PC-3 (cell line): ENCODE measurements at regions of chr1 and their contacts with region 1.

Region 1: DNA sequence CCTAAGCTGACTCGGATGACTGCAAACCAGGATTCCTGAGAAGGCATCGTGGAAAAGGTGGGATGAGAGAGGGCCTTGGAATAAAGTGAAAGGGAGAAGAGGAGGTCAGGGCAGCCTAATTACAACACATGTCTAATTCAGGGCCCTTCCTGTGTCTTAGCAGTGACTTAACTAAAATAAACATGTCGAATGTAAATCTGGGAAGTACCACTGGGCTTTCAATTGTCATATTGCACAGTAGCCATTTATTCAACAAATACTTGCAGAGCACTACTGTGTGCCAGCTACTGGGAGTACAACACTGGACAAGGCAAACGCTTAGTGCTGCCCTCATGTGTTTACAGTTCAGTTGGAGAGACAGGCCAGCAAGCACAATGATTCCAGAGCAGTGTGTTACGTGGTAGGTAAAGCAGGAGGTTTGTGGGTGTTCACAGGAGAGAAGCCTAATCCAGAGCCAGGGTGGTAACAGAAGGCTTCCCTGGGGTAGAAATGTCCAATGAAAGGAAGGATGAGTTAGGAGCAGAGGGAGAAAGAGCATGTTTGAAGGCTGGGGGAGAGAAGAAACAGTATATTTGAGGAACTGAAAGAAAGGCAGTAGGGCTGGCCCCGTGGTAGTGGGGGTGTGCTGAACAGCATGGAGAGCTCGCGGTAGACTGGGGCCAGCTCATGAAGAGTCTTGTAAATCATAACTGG is 38.0 kb upstream of the RASAL2 start:
- DNase-seq: peak; percentile 54
- ATAC-seq: peak; percentile 80
- H3K4me3 ChIP-seq: 0 out of 2 replicates have a peak overlapping the region, but pooled peaks have one; percentile 21
- H3K27ac ChIP-seq: peak overlapping the region; percentile 49
- H3K4me1 ChIP-seq: peaks cover 17% of the 10 kb centered on the region
- H3K27me3 ChIP-seq: no peaks in the 10 kb centered on the region
- CTCF ChIP-seq: peak; percentile 51

Region 2: DNA sequence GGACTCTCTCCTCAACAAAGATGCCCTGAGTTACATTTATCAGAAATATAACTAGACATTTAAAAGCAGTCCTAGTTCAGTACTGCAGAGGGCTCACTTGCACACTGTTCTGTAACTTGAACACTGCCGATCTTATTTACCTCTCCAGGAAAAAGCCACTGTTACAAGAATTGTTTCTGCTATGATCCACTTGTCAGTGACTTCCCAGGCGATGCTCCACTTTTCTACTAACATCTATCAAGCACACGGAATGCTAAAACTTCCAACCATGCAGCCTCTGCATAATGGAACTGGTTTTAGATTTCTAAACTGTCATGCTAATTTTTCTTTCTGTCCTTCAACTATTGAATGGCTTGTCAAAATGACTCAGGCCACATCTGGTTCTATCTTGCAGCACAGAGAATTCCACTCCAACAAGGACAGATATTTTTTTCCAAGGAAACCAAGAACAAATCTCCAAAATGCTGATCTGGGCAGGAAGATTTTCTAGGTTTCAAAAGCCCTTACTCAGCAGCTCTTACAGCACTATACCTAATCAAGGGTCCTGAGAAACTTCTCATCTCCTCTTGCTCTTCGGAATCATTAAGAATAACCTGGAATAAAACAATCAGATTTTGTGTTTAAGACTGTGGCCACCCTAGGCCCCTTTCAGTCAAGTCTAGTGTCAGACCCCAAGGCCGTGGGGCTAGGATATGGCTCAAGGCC is 96.0 kb before region 1 on chr1:
- CTCF ChIA-PET with region 1: interaction called, 3 read pairs
- POLR2A ChIA-PET with region 1: no interaction called
- intact Hi-C with region 1: loop called (anchors 1 kb)
- DNase-seq: peak; percentile 55
- ATAC-seq: peak; percentile 86
- H3K4me3 ChIP-seq: no peak overlapping the region
- H3K27ac ChIP-seq: no peak overlapping the region
- H3K4me1 ChIP-seq: no peaks in the 10 kb centered on the region
- H3K27me3 ChIP-seq: no peaks in the 10 kb centered on the region
- CTCF ChIP-seq: peak; percentile 64

Region 3: GRCh38 chr1:178093205-178093957 is 37.5 kb after region 1 on chr1:
- CTCF ChIA-PET with region 1: no interaction called
- POLR2A ChIA-PET with region 1: no interaction called
- intact Hi-C with region 1: loop called (anchors 5 kb)
- DNase-seq: peak; percentile 92
- ATAC-seq: peak; percentile 80
- H3K4me3 ChIP-seq: peak overlapping the region; percentile 83
- H3K27ac ChIP-seq: peak overlapping the region; percentile 54
- H3K4me1 ChIP-seq: peaks cover 41% of the 10 kb centered on the region
- H3K27me3 ChIP-seq: no peaks in the 10 kb centered on the region
- CTCF ChIP-seq: no peak